ENCODE measurements at regions of chr15 and their contacts with region 1.

Region 1: DNA sequence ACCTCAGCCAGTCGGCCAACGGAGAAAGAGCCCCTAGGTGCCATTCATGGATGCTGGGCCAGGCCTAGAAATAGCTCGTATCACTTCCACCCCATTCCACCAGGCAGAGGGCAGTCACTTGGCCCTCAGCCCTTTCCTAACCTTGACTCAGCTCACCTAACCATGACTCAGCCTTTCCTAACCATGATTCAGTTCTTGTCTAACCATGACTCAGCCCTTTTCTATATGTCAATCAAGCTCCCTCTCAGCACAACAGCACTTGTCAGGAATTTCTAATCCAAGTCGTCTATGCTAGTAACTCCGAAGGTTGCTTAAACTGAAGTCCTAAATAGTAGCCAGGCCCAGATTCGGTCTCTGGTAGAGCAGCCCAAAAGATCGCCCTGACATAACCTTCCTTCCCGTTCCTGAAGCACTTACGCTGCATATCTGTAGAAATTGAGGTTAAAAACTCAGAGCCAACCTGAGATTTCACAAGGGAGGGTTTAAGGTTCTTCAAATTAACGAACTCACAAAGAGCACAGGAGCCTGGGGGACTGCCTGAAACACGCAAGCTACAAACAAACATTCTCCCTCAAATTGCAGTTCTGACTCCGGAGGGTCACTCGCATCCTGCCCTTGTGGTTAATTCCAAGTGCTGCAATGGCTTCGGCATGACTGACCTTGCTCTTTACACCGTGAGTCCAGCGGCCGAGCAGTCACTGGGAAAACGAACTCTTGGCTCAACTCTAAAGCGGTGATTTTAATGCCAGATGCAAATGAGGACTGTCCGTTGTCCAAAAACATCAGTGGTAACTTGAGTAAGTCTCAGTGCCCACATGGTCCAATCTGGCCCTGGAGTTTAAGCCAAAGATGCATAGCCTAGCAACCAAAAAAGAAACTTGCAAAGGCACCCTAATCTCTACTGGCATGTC is 99.9 kb downstream of the ADAMTS17 start:
- DNase-seq: peak; percentile 63
- ATAC-seq: peak; percentile 84
- H3K4me3 ChIP-seq: no peak overlapping the region; a peak in 1 of 6 replicates
- H3K27ac ChIP-seq: peak overlapping the region; percentile 28
- H3K4me1 ChIP-seq: peaks cover 14% of the 10 kb centered on the region
- H3K27me3 ChIP-seq: no peaks in the 10 kb centered on the region
- CTCF ChIP-seq: no peak
- EP300 ChIP-seq: no peak
- POLR2A ChIP-seq: no peak
- RAD21 ChIP-seq: no peak

Region 2: DNA sequence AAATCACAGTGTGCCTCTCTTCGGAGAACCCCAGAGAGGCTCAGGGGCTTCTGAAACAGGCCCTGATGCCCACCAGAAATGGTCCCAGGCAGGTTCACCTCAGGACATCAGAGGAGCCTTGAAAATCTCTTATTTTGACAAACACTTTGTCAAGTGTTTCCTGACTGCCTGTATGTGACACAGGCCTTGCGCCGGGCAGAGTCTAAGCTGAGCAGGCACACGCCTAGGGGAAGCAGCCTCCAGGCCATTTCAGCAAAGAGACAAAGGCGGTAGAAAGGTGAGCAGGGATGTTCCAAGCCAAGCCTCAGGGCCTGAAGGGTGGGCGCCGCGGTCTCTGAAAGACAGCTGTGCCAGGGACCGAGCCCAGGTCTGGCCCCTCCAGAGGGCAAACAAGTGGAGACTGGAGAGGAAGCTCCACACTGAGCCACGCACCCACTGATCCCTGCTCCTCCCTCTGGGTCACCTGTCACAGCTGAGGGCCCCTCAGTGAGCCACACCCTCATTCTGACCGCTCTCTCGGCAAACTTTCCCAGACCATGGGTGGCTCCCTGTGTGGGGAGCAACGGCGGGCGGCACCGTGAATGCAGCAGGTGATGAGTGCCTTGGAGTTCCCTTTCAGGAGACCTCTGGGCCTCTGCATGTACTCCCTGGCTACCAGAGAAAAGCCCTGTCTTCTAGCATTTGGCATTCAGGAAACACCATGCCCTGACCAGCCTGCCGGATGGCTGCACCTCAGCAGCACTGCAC is 36.1 kb before region 1 on chr15:
- CTCF ChIA-PET with region 1: no interaction called
- POLR2A ChIA-PET with region 1: no interaction called
- in situ Hi-C with region 1: no loop called
- intact Hi-C with region 1: loop called (anchors 1 kb)
- DNase-seq: no peak
- ATAC-seq: no peak
- H3K4me3 ChIP-seq: no peak overlapping the region
- H3K27ac ChIP-seq: no peak overlapping the region
- H3K4me1 ChIP-seq: peaks cover 11% of the 10 kb centered on the region; the same call in 1 of the 2 replicates
- H3K27me3 ChIP-seq: no peaks in the 10 kb centered on the region
- CTCF ChIP-seq: no peak
- EP300 ChIP-seq: no peak
- POLR2A ChIP-seq: no peak
- RAD21 ChIP-seq: no peak

Measured in HepG2 (cell line).